ENCODE measurements at regions of chr20 and their contacts with region 1.

Region 1: DNA sequence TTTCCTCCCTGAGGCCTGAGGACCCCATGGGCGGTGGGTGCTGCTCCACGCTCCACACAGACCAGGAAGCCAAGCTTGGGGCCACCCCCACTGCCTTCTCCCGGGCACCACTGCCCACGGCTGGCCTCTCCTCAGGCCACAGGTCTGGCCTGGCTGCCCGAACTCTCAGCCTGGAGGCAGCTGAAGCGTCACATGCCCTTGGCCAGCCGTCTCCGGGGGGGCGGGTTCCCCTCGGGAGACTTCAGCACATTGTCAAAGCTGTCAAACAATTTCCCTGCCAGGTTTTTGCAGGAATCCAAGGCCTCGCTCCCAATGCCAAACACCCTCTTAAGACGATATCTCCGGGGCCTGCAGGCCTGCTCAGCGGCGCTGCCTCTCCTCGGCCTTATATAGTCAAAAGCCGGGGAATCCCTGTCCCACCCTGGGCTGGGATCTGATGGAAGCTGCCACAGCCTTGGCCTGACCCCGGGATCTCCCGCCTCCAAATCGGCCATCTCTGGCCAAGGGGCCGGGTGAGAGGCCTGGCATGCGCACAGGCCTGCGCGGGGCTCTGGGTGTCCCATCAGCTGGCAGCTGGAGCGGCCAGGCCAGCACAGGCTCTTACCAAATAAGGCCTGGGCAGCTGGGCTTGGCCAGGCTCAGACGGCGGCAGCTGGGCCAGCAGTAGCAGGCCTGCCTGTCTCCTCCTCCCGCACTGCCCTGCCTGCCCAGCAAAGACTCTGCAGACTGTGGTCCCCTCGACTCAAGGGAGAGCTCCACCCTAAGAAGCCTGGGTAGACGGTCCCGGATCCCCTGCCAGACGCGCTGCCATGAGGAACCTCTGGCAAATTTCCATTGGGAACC is 49.7 kb downstream of the RBM38 start:
- DNase-seq: peak; percentile 71 to 99 (median 88)

Region 2: DNA sequence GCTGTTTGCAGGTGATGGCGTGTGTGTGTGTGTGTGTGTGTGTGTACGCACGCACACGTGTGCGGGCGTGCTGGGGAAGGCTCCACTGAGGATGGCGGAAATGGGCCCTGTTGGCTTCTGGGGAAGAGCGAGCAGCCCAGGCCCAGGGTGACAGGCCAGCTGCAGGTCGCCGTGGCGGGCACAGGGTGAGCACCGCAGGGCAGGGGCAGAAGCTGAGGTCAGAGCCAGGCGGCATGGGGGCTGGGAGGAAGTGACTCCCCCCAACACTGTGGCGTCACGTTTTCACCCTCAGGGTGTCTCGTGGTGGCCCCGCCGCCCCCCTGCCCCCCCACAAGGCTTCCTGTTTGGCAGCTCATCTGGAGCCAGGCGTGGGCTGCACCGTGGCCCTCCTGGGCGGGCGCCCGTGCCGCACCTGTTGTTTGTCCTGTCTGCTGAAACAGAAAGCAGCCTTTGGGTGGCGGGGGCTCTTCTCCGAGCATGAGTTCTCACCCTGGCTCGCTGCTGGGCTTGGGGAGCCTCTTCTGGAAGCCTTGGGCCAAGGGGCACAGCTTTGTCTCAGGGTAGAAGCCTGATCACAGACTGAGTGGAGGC is 42.6 kb before region 1 on chr20:
- intact Hi-C with region 1: loop called (anchors 2 kb)
- DNase-seq: peak in 4 of 10 donors; percentile 18 to 83 (median 66)

Region 3: GRCh38 chr20:57526087-57526884 is 85.4 kb after region 1 on chr20:
- intact Hi-C with region 1: no loop called
- DNase-seq: no peak

Region 4: GRCh38 chr20:57838670-57839151 is 397.8 kb after region 1 on chr20:
- intact Hi-C with region 1: no loop called
- DNase-seq: peak in 1 of 10 donors; percentile 82